Adrenal gland (tissue), 19 donors: ENCODE measurements at regions of chr1 and their contacts with region 1.

Region 1: DNA sequence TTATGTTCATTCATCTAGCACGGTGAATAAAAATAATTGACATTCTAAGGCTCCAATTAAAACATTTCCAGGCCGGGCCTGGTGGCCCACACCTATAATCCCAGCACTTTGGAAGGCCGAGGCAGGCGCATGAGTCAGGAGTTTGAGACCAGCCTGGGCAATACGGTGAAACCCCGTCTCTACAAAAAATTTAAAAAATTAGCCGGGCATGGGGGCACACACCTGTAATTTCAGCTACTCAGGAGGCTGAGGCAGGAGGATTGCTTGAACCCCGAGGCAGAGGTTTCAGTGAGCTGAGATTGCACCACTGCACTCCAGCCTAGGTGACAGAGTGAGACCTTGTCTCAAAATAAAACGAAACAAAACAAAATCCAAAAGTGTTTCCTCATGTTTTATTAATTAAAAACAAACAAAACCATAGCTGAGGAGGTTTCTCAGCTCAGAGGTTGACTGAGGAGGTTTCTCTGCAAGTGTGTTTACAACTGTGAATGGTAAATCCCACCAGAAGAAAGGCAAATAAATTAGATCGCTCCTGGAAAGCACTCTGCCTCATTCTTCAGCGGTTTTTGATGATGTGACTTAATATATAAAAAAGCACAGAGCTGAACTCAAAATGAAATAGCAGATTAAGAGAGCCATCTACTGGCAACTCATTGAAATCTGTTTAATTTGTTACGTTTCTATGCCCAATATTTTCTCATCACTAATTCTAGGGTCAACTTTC is 37.7 kb upstream of the ATG4C start:
- DNase-seq: no peak
- H3K4me3 ChIP-seq: no peak overlapping the region
- H3K27ac ChIP-seq: no peak overlapping the region
- H3K4me1 ChIP-seq: no peaks in the 10 kb centered on the region
- H3K27me3 ChIP-seq: no peaks in the 10 kb centered on the region
- CTCF ChIP-seq: peak; percentile 23 to 75 (median 66)
- POLR2A ChIP-seq: no peak

Region 2: GRCh38 chr1:62508187-62508758 is 238.0 kb before region 1 on chr1:
- intact Hi-C with region 1: loop called in 1 of 2 experiments (anchors 5 kb)
- DNase-seq: peak in 3 of 7 donors; percentile 12 to 35 (median 29)
- H3K4me3 ChIP-seq: no peak overlapping the region
- H3K27ac ChIP-seq: no peak overlapping the region
- H3K4me1 ChIP-seq: no peaks in the 10 kb centered on the region
- H3K27me3 ChIP-seq: no peaks in the 10 kb centered on the region
- CTCF ChIP-seq: peak; percentile 27 to 63 (median 51)
- POLR2A ChIP-seq: no peak

Region 3: GRCh38 chr1:62530516-62531154 is 215.6 kb before region 1 on chr1:
- intact Hi-C with region 1: loop called (anchors 5 to 10 kb)
- DNase-seq: peak; percentile 29 to 87 (median 47)
- H3K4me3 ChIP-seq: no peak overlapping the region
- H3K27ac ChIP-seq: no peak overlapping the region
- H3K4me1 ChIP-seq: no peaks in the 10 kb centered on the region
- H3K27me3 ChIP-seq: no peaks in the 10 kb centered on the region
- CTCF ChIP-seq: peak; percentile 34 to 65 (median 55)
- POLR2A ChIP-seq: no peak